Esophagus muscularis mucosa (tissue), 4 donors: ENCODE measurements at regions of chr19 and their contacts with region 1.

Region 1: DNA sequence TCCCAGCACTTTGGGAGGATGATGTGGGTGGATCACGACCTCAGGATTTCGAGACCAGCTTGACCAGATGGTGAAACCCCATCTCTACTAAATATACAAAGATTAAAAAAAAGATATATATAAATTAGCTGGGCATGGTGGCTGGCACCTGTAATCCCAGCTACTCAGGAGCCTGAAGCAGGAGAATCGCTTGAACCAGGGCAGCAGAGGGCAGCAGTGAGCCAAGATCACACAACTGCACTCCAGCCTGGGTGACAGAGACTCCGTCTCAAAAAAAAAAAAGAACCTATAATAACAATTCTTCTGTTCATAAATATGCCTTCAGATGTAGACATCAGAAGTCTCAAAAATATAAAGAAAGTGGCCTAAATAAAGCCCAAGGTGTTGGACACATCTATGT is 7.6 kb downstream of the ZNF737 start:
- DNase-seq: no peak
- H3K4me3 ChIP-seq: no peak overlapping the region
- H3K27ac ChIP-seq: no peak overlapping the region
- H3K4me1 ChIP-seq: peaks cover 0 to 33% (median 28%) of the 10 kb centered on the region in 4 donors
- H3K27me3 ChIP-seq: no peaks in the 10 kb centered on the region
- CTCF ChIP-seq: peak; percentile 51 to 62 (median 57)
- EP300 ChIP-seq: no peak
- POLR2A ChIP-seq: no peak

Region 2: GRCh38 chr19:20367811-20368294 is 190.2 kb before region 1 on chr19:
- intact Hi-C with region 1: no loop called
- DNase-seq: no peak
- H3K4me3 ChIP-seq: no peak overlapping the region
- H3K27ac ChIP-seq: no peak overlapping the region
- H3K4me1 ChIP-seq: no peaks in the 10 kb centered on the region
- H3K27me3 ChIP-seq: no peaks in the 10 kb centered on the region
- CTCF ChIP-seq: no peak
- EP300 ChIP-seq: no peak
- POLR2A ChIP-seq: no peak

Region 3: DNA sequence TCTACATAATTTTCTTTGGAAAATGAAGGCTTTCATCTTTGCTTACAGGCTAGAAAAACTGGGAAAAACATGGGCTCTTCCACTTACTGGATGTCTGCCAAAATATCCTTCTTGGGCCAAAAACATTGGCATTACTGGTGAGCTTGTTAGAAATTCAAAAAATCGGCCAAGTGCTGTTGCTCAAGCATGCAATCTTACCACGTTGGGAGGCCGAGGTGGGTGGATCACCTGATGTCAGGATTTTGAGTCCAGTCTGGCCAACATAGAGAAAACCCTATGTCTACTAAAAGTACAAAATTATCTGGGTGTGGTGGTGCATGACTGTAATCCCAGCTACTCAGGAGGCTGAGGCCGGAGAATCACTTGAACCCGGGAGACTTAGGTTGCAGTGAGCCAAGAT is 169.2 kb before region 1 on chr19:
- intact Hi-C with region 1: no loop called
- DNase-seq: no peak
- H3K4me3 ChIP-seq: no peak overlapping the region
- H3K27ac ChIP-seq: no peak overlapping the region
- H3K4me1 ChIP-seq: no peaks in the 10 kb centered on the region
- H3K27me3 ChIP-seq: no peaks in the 10 kb centered on the region
- CTCF ChIP-seq: no peak
- EP300 ChIP-seq: no peak
- POLR2A ChIP-seq: no peak

Region 4: DNA sequence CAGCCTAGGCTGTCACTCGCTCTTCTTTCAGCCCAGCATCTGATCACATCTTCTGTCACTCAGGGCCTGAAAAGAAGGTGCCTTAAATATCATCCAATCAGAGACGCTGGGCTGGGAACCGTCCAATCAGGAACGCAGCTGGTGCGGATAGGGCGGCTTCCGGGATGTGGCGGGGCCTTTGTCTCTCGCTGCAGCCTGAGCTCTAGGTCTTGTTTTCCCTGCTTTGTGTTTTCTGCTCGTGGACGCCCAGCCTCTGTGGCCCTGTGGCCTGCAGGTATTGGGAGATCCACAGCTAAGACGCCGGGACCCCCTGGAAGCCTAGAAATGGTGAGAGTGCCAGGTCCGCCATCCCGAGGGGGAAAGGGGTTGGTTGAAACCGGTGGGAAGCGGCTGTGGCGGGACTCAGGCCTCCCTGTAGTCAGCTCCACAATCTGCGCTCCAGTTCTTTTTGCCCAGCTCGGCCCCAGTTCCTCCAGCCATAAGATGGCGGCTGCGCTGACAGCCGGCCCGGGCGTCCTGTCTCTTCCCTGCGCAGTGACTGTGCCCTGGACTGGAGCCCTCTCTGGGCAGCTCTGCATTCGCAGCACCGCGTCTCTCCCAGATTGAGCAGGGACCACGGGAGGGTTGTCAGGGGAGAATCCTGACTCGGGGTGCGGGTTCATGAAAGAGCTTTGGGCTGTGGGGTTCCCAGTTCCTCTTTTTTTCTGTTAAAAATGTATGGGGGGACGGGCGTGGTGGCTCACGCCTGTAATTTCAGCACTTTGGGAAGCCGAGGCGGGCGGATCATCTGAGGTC is 365.3 kb after region 1 on chr19 and contains the start of gene ZNF85:
- intact Hi-C with region 1: loop called (anchors 5 kb)
- DNase-seq: peak; percentile 98
- H3K4me3 ChIP-seq: peak within 1 kb of the TSS; percentile 67 to 74 (median 71)
- H3K27ac ChIP-seq: peak within 1 kb of the TSS; percentile 82 to 92 (median 87)
- H3K4me1 ChIP-seq: peaks cover 0 to 15% (median 13%) of the 10 kb centered on the region in 4 donors
- H3K27me3 ChIP-seq: no peaks in the 10 kb centered on the region
- CTCF ChIP-seq: no peak
- EP300 ChIP-seq: no peak
- POLR2A ChIP-seq: no peak
- total RNA-seq, gene ZNF85: 2.1 to 4.1 (median 2.5) TPM